Gastrocnemius medialis (tissue), 4 donors: ENCODE measurements at regions of chr9 and their contacts with region 1.

Region 1: GRCh38 chr9:22528485-22528884 is 81.9 kb downstream of the DMRTA1 start:
- DNase-seq: peak in 1 of 2 donors; percentile 13
- ATAC-seq: peak in 1 of 2 donors; percentile 80
- H3K4me3 ChIP-seq: no peak overlapping the region
- H3K27ac ChIP-seq: no peak overlapping the region
- H3K4me1 ChIP-seq: peaks cover 0 to 14% of the 10 kb centered on the region in 2 donors
- H3K27me3 ChIP-seq: no peaks in the 10 kb centered on the region
- CTCF ChIP-seq: peak in 4 of 5 experiments; percentile 17 to 56 (median 28)
- POLR2A ChIP-seq: no peak

Region 2: GRCh38 chr9:22922222-22922621 is 393.7 kb after region 1 on chr9:
- in situ Hi-C with region 1: loop called in 1 of 4 experiments (anchors 25 kb)
- intact Hi-C with region 1: no loop called
- DNase-seq: no peak
- ATAC-seq: no peak
- H3K4me3 ChIP-seq: no peak overlapping the region
- H3K27ac ChIP-seq: no peak overlapping the region
- H3K4me1 ChIP-seq: no peaks in the 10 kb centered on the region
- H3K27me3 ChIP-seq: no peaks in the 10 kb centered on the region
- CTCF ChIP-seq: no peak
- POLR2A ChIP-seq: no peak

Region 3: DNA sequence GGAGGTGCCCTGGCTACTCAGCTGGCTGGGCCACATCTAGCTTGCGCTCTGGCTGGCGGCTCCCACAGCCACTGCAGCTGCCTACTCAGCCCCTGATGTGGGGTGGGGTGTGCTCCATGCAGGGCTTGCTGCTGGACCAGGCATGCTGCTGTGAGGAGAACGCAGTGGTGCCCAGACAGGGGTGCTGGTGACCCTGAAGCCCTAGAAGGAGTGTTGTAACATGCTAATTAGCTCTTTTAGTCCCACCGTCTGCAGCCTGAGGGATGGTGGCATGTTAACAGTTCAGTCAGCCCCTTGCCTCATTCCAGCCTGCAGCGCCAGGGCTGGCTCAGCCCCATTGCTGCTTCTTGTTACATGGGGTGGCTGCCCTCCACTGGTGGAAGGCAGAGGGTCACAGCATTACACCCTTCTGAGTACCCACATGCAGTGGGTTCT is 560.5 kb after region 1 on chr9:
- in situ Hi-C with region 1: no loop called
- intact Hi-C with region 1: loop called (anchors 5 kb)
- DNase-seq: no peak
- ATAC-seq: no peak
- H3K4me3 ChIP-seq: no peak overlapping the region
- H3K27ac ChIP-seq: no peak overlapping the region
- H3K4me1 ChIP-seq: no peaks in the 10 kb centered on the region
- H3K27me3 ChIP-seq: no peaks in the 10 kb centered on the region
- CTCF ChIP-seq: no peak
- POLR2A ChIP-seq: no peak